Activated naive CD4-positive, alpha-beta T cell treated with anti-CD3 and anti-CD28 coated beads for 36 hours (primary cell): ENCODE measurements at regions of chr4 and their contacts with region 1.

Region 1: GRCh38 chr4:67700738-67701516 is at the start of gene UBA6:
- DNase-seq: peak; percentile 97
- H3K4me3 Mint-ChIP-seq: peak within 1 kb of the TSS; percentile 91
- H3K27ac Mint-ChIP-seq: peak within 1 kb of the TSS; percentile 96
- H3K4me1 Mint-ChIP-seq: peaks cover 48% of the 10 kb centered on the region
- H3K27me3 Mint-ChIP-seq: no peaks in the 10 kb centered on the region
- total RNA-seq, gene UBA6: 71.6 to 79.5 TPM

Region 2: GRCh38 chr4:67558493-67558892 is 142.4 kb before region 1 on chr4 and contains the start of gene STAP1:
- CTCF ChIA-PET with region 1: no interaction called
- intact Hi-C with region 1: loop called (anchors 2 kb)
- DNase-seq: peak; percentile 65
- H3K4me3 Mint-ChIP-seq: peak within 1 kb of the TSS; percentile 86
- H3K27ac Mint-ChIP-seq: peak within 1 kb of the TSS; percentile 93
- H3K4me1 Mint-ChIP-seq: peaks cover 49% of the 10 kb centered on the region
- H3K27me3 Mint-ChIP-seq: no peaks in the 10 kb centered on the region
- total RNA-seq, gene STAP1: 18.9 to 22.1 TPM

Region 3: GRCh38 chr4:67658302-67658701 is 42.6 kb before region 1 on chr4:
- CTCF ChIA-PET with region 1: no interaction called
- intact Hi-C with region 1: loop called (anchors 1 kb)
- DNase-seq: peak; percentile 58
- H3K4me3 Mint-ChIP-seq: no peak overlapping the region
- H3K27ac Mint-ChIP-seq: no peak overlapping the region
- H3K4me1 Mint-ChIP-seq: peaks cover 25% of the 10 kb centered on the region
- H3K27me3 Mint-ChIP-seq: no peaks in the 10 kb centered on the region

Region 4: GRCh38 chr4:67684839-67685531 is 15.9 kb before region 1 on chr4:
- CTCF ChIA-PET with region 1: interaction called, 5 read pairs
- intact Hi-C with region 1: loop called (anchors 1 kb)
- DNase-seq: no peak
- H3K4me3 Mint-ChIP-seq: no peak overlapping the region
- H3K27ac Mint-ChIP-seq: peak overlapping the region; percentile 11
- H3K4me1 Mint-ChIP-seq: peaks cover 32% of the 10 kb centered on the region
- H3K27me3 Mint-ChIP-seq: no peaks in the 10 kb centered on the region

Region 5: GRCh38 chr4:67714248-67714583 is 13.3 kb after region 1 on chr4:
- CTCF ChIA-PET with region 1: interaction called, 6 read pairs
- intact Hi-C with region 1: loop called (anchors 1 kb)
- DNase-seq: peak; percentile 71
- H3K4me3 Mint-ChIP-seq: peak overlapping the region; percentile 18
- H3K27ac Mint-ChIP-seq: peak overlapping the region; percentile 85
- H3K4me1 Mint-ChIP-seq: peaks cover 31% of the 10 kb centered on the region
- H3K27me3 Mint-ChIP-seq: no peaks in the 10 kb centered on the region

Region 6: GRCh38 chr4:68249434-68249833 is 548.5 kb after region 1 on chr4:
- CTCF ChIA-PET with region 1: no interaction called
- intact Hi-C with region 1: loop called (anchors 5 kb)
- DNase-seq: peak; percentile 25
- H3K4me3 Mint-ChIP-seq: no peak overlapping the region
- H3K27ac Mint-ChIP-seq: peak overlapping the region; percentile 88
- H3K4me1 Mint-ChIP-seq: peaks cover 16% of the 10 kb centered on the region
- H3K27me3 Mint-ChIP-seq: peaks cover 7% of the 10 kb centered on the region